ENCODE measurements at regions of chr1 and their contacts with region 1.

Region 1: GRCh38 chr1:115980998-115981993 is 5.0 kb downstream of the SLC22A15 start:
- DNase-seq: peak; percentile 73
- H3K4me3 ChIP-seq: peak overlapping the region in 1 of 2 experiments; percentile 38; a peak in 1 of 4 replicates
- H3K27ac ChIP-seq: no peak overlapping the region; a peak in 1 of 4 replicates
- H3K4me1 ChIP-seq: peaks cover 0 to 4% of the 10 kb centered on the region in 2 experiments; a peak in 1 of 4 replicates
- H3K27me3 ChIP-seq: peaks cover 8% of the 10 kb centered on the region; the same call in 1 of the 2 replicates
- CTCF ChIP-seq: peak; percentile 77
- EP300 ChIP-seq: no peak
- RAD21 ChIP-seq: peak; percentile 87

Region 2: DNA sequence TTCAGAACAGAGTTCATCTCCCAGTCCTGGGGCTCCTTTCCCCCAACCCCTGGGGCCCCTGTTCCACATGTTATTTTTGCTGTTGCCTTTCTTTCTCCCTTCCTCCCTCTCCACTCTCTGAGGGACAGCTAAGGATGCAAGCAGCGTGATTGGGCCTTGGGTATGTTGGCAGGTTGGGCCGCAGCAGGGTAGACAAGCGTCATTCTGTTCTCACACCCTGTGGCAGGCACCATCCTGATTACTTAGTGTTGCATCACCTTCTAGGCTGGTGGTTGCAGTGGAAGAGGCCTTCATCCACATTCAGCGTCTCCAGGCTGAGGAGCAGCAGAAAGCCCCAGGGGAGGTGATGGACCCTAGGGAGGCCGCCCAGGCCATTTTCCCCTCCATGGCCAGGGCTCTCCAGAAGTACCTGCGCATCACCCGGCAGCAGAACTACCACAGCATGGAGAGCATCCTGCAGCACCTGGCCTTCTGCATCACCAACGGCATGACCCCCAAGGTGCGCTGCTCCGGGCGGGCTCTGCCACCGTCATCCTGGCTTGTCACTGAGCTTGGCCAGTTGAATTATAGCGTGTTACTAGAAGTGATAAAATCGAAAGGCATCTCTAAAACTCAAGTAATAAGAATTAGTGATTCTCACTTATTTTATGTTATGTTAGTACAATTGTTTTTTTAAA is 296.1 kb before region 1 on chr1:
- CTCF ChIA-PET with region 1: no interaction called
- POLR2A ChIA-PET with region 1: no interaction called
- DNase-seq: no peak
- H3K4me3 ChIP-seq: no peak overlapping the region
- H3K27ac ChIP-seq: no peak overlapping the region
- H3K4me1 ChIP-seq: no peaks in the 10 kb centered on the region
- H3K27me3 ChIP-seq: no peaks in the 10 kb centered on the region
- CTCF ChIP-seq: no peak
- EP300 ChIP-seq: no peak
- RAD21 ChIP-seq: no peak

Region 3: DNA sequence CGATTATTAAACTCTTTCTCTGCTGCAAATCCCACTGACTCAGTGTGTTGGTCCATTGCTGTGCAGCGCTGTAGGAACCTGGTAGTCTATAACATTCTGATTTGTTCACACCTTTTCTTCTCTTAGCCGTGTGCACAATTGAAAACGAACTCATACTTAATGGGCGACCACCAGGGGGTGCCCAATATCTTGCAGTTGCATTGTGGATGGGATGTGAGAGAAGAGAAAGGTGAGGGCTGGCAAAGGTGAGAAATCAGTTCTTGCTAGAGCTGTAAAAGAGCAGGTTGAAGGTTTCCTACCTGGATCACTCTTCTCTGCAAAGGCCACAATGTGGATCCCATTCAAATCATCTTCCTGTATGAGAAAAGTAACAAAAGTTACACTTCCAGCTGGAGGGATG is 263.8 kb before region 1 on chr1:
- CTCF ChIA-PET with region 1: interaction called, 11 read pairs
- POLR2A ChIA-PET with region 1: no interaction called
- DNase-seq: peak; percentile 26
- H3K4me3 ChIP-seq: no peak overlapping the region; a peak in 2 of 4 replicates
- H3K27ac ChIP-seq: peak overlapping the region in 1 of 2 experiments; percentile 48; a peak in 1 of 4 replicates
- H3K4me1 ChIP-seq: peaks cover 0 to 24% of the 10 kb centered on the region in 2 experiments; a peak in 2 of 4 replicates
- H3K27me3 ChIP-seq: peaks cover 7% of the 10 kb centered on the region; the same call in 1 of the 2 replicates
- CTCF ChIP-seq: peak; percentile 42
- EP300 ChIP-seq: no peak
- RAD21 ChIP-seq: peak; percentile 62

Region 4: DNA sequence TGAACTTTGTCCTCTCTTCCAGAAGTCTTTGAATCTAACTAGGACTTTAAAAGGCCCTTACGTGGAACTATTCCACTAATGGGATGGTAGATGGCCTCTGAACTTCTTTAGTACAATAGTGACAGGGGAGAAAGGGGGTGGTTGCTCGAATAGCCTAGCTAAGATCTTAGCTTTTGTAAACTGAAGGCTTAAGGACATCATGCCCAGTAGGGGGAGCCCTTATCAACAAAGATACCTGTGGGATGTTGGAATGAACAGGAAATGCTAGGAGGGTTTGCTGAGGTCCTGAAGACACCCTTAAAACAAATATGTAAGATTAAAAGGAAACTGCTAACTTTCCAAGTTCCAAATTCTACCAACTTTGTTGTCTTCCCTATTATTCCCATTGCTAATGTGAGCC is 173.6 kb before region 1 on chr1:
- CTCF ChIA-PET with region 1: interaction called, 87 read pairs
- POLR2A ChIA-PET with region 1: no interaction called
- DNase-seq: peak; percentile 51
- H3K4me3 ChIP-seq: no peak overlapping the region; a peak in 1 of 4 replicates
- H3K27ac ChIP-seq: no peak overlapping the region
- H3K4me1 ChIP-seq: peaks cover 0 to 7% of the 10 kb centered on the region in 2 experiments; a peak in 1 of 4 replicates
- H3K27me3 ChIP-seq: no peaks in the 10 kb centered on the region; the same call in 1 of the 2 replicates
- CTCF ChIP-seq: peak; percentile 82
- EP300 ChIP-seq: no peak
- RAD21 ChIP-seq: peak; percentile 85

Region 5: GRCh38 chr1:115969509-115969908 is 11.8 kb before region 1 on chr1:
- CTCF ChIA-PET with region 1: interaction called, 13 read pairs
- POLR2A ChIA-PET with region 1: no interaction called
- DNase-seq: peak; percentile 34
- H3K4me3 ChIP-seq: no peak overlapping the region
- H3K27ac ChIP-seq: no peak overlapping the region
- H3K4me1 ChIP-seq: peaks cover 0 to 3% of the 10 kb centered on the region in 2 experiments; a peak in 1 of 4 replicates
- H3K27me3 ChIP-seq: no peaks in the 10 kb centered on the region
- CTCF ChIP-seq: no peak
- EP300 ChIP-seq: no peak
- RAD21 ChIP-seq: no peak

Region 6: DNA sequence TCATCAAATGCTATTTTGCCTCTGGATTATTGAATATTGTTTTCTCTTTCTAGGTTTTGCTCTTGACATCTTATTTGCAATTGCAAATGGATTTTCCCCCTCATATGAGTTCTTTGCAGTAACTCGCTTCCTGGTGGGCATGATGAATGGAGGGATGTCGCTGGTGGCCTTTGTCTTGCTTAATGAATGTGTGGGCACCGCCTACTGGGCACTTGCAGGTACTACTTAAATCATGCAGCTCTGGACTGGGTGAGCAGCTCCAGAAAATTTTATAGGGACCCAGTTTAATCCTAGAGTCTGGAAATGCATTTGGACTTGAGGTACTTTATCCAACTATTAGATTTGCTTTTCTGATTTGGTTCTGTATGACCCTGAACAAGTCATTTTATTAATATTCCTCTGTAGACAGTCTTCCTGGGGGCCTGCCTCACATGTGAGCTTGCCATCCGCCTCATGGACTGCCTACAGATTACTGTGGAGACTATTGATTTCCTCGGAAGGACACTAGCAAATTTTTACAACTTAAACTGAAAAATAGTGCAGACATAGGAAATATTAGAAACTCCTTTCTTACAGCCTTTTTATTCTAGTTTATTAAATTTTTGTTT is 39.5 kb after region 1 on chr1:
- CTCF ChIA-PET with region 1: interaction called, 18 read pairs
- POLR2A ChIA-PET with region 1: no interaction called
- DNase-seq: peak; percentile 63
- H3K4me3 ChIP-seq: peak overlapping the region in 1 of 2 experiments; percentile 46; a peak in 1 of 4 replicates
- H3K27ac ChIP-seq: no peak overlapping the region
- H3K4me1 ChIP-seq: no peaks in the 10 kb centered on the region
- H3K27me3 ChIP-seq: no peaks in the 10 kb centered on the region
- CTCF ChIP-seq: peak; percentile 69
- EP300 ChIP-seq: no peak
- RAD21 ChIP-seq: peak; percentile 73

Measured in SK-N-SH (cell line).